Panc1 (cell line): ENCODE measurements at regions of chr1 and their contacts with region 1.

Region 1: GRCh38 chr1:30274976-30275621 is 448.3 kb downstream of the MATN1 start:
- DNase-seq: no peak
- ATAC-seq: no peak
- H3K4me3 ChIP-seq: no peak overlapping the region
- H3K27ac ChIP-seq: no peak overlapping the region
- H3K4me1 ChIP-seq: no peaks in the 10 kb centered on the region
- H3K27me3 ChIP-seq: peaks cover 12% of the 10 kb centered on the region
- CTCF ChIP-seq: no peak

Region 2: DNA sequence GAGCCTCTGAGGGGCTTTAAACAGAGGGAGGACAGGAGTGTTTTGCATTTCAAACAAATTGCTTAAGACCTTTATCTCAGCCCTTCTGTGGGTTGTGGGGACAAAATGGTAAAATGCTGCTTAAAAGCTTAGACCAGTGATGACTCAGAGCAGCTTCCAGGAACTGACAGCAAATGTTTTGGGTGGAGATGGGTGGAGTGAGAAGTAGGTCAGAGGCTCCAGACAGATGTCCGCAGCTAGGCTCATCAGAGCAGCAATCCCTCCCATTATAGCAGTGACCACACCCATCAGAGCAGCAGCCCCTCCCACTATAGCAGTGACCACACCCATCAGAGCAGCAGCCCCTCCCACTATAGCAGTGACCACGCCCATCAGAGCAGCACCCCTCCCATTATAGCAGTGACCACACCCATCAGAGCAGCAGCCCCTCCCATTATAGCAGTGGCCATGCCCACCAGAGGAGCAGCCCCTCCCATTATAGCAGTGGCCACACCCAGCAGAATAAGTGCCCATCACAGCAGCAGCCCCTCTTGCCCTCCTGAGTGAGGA is 83.9 kb before region 1 on chr1:
- CTCF ChIA-PET with region 1: no interaction called
- POLR2A ChIA-PET with region 1: no interaction called
- in situ Hi-C with region 1: no loop called
- intact Hi-C with region 1: no loop called
- DNase-seq: no peak
- ATAC-seq: peak; percentile 54; the same call in 1 of the 2 replicates
- H3K4me3 ChIP-seq: no peak overlapping the region
- H3K27ac ChIP-seq: no peak overlapping the region
- H3K4me1 ChIP-seq: no peaks in the 10 kb centered on the region
- H3K27me3 ChIP-seq: no peaks in the 10 kb centered on the region; the same call in 1 of the 2 replicates
- CTCF ChIP-seq: no peak

Region 3: GRCh38 chr1:30418081-30418938 is 143.2 kb after region 1 on chr1:
- CTCF ChIA-PET with region 1: interaction called, 13 read pairs
- POLR2A ChIA-PET with region 1: no interaction called
- in situ Hi-C with region 1: no loop called
- intact Hi-C with region 1: no loop called
- DNase-seq: no peak
- ATAC-seq: no peak
- H3K4me3 ChIP-seq: no peak overlapping the region
- H3K27ac ChIP-seq: no peak overlapping the region
- H3K4me1 ChIP-seq: no peaks in the 10 kb centered on the region
- H3K27me3 ChIP-seq: peaks cover 2% of the 10 kb centered on the region; the same call in 1 of the 2 replicates
- CTCF ChIP-seq: no peak